Calu3 (cell line): ENCODE measurements at regions of chr2 and their contacts with region 1.

Region 1: GRCh38 chr2:85728883-85729824 is 24.6 kb upstream of the ATOH8 start:
- DNase-seq: peak; percentile 94
- H3K4me3 Mint-ChIP-seq: no peak overlapping the region
- H3K27ac Mint-ChIP-seq: no peak overlapping the region
- H3K4me1 Mint-ChIP-seq: peaks cover 5% of the 10 kb centered on the region
- H3K27me3 Mint-ChIP-seq: peaks cover 35% of the 10 kb centered on the region
- CTCF ChIP-seq: peak; percentile 94

Region 2: DNA sequence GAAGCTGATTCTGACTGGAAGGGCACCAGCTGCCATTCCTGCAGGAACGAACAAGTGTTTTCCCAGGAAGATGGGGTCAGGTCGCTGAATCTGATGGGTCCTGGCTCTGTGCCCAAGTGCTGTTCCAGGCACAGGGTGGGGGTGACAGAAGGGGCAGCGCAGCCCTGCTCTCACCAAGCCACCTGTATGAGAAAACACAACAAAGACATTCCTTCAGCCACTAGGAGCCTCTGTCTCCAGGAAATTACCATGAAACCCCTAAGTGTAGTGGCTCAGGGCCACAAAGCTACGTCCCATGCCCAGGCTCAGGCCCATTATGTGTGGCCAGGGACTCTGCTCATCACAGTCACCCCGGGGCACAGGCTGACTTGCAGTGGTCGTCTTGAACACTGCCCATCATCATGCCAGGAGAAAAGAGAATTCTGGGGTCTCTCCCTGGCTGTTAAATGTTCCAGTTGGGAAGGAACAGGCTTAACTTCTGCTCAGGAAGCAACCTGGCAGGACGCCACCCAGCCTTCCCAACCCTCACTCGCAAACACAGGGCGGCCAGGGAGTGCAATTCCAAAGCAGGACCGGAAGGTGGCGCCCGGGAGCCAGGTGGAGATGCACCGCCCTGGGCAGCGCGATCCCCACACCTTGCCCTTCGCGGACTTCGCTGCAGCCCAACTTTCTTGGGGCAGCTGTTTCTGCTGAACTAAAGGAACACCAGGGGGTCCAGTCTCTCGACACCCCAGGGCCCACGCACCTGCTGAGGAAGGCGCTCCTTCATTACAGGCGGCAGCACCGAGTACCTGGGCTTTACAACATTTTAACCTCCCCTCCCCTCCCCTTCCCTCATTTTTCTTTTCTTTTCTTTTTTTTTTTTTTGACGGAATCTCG is 50.1 kb before region 1 on chr2:
- CTCF ChIA-PET with region 1: interaction called, 13 read pairs
- intact Hi-C with region 1: no loop called
- DNase-seq: peak; percentile 93
- H3K4me3 Mint-ChIP-seq: no peak overlapping the region
- H3K27ac Mint-ChIP-seq: no peak overlapping the region
- H3K4me1 Mint-ChIP-seq: peaks cover 14% of the 10 kb centered on the region
- H3K27me3 Mint-ChIP-seq: peaks cover 15% of the 10 kb centered on the region
- CTCF ChIP-seq: peak; percentile 92

Region 3: DNA sequence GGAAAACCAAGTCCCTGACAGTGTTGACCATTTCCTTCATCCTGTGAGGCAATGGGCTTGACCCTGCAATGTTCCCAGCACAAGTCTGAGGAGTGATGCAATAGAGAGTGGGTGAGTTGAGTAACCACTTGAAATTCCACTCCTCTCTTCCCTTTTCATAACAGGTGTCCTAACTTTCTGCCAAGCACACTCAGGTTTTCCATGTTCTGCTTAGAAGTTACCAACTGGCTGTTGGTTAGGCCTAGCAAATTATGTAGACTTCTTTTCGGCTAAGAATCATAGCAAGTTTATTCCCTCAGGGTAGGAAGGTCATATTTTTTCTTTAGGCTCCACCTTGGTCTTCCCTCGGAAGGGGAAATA is 23.5 kb before region 1 on chr2:
- CTCF ChIA-PET with region 1: no interaction called
- intact Hi-C with region 1: no loop called
- DNase-seq: peak; percentile 49
- H3K4me3 Mint-ChIP-seq: no peak overlapping the region
- H3K27ac Mint-ChIP-seq: peak overlapping the region; percentile 79
- H3K4me1 Mint-ChIP-seq: peaks cover 51% of the 10 kb centered on the region
- H3K27me3 Mint-ChIP-seq: no peaks in the 10 kb centered on the region
- CTCF ChIP-seq: no peak

Region 4: GRCh38 chr2:85741833-85742455 is 12.8 kb after region 1 on chr2:
- CTCF ChIA-PET with region 1: interaction called, 13 read pairs
- intact Hi-C with region 1: no loop called
- DNase-seq: peak; percentile 67
- H3K4me3 Mint-ChIP-seq: peak overlapping the region; percentile 53
- H3K27ac Mint-ChIP-seq: peak overlapping the region; percentile 84
- H3K4me1 Mint-ChIP-seq: peaks cover 38% of the 10 kb centered on the region
- H3K27me3 Mint-ChIP-seq: no peaks in the 10 kb centered on the region
- CTCF ChIP-seq: no peak

Region 5: GRCh38 chr2:85813982-85814801 is 85.0 kb after region 1 on chr2:
- CTCF ChIA-PET with region 1: interaction called, 28 read pairs
- intact Hi-C with region 1: loop called (anchors 1 kb)
- DNase-seq: peak; percentile 95
- H3K4me3 Mint-ChIP-seq: no peak overlapping the region
- H3K27ac Mint-ChIP-seq: no peak overlapping the region
- H3K4me1 Mint-ChIP-seq: no peaks in the 10 kb centered on the region
- H3K27me3 Mint-ChIP-seq: peaks cover 19% of the 10 kb centered on the region
- CTCF ChIP-seq: peak; percentile 91

Region 6: GRCh38 chr2:86079981-86080911 is 351.1 kb after region 1 on chr2:
- CTCF ChIA-PET with region 1: no interaction called
- intact Hi-C with region 1: loop called (anchors 10 kb)
- DNase-seq: peak; percentile 77
- H3K4me3 Mint-ChIP-seq: no peak overlapping the region
- H3K27ac Mint-ChIP-seq: no peak overlapping the region
- H3K4me1 Mint-ChIP-seq: no peaks in the 10 kb centered on the region
- H3K27me3 Mint-ChIP-seq: no peaks in the 10 kb centered on the region
- CTCF ChIP-seq: peak; percentile 71

Region 7: GRCh38 chr2:86263715-86264562 is 534.8 kb after region 1 on chr2:
- CTCF ChIA-PET with region 1: no interaction called
- intact Hi-C with region 1: no loop called
- DNase-seq: no peak
- H3K4me3 Mint-ChIP-seq: no peak overlapping the region
- H3K27ac Mint-ChIP-seq: no peak overlapping the region
- H3K4me1 Mint-ChIP-seq: no peaks in the 10 kb centered on the region
- H3K27me3 Mint-ChIP-seq: no peaks in the 10 kb centered on the region
- CTCF ChIP-seq: no peak